ENCODE measurements at regions of chr19 and their contacts with region 1.

Region 1: DNA sequence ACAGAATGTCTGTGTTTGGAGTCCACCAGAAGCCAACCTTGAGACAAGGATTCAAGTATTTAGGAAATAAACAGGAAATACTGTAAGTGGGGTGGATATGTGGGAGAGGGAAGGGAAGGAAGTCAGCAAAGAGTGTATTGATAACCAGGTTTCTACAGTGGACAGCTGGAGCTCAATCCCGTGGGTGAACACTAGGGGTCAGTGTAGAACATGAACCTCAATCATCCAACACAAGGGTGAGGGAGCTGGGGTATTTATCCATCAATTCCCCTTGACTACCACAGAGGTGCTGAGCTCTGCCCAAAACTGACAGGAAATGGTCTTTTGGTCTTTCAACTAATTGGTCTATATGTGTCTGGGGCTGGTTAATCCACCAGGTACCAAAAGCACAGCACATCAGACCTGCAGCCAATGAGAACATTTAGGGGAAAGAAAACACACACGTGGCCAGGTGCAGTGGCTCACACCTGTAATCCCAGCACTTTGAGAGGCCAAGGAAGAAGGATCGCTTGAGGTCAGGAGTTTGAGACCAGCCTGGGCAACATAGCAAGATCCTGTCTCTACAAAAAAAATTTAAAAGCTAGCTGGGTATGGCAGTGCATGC is 5.6 kb upstream of the SYDE1 start:
- DNase-seq: peak in 1 of 3 donors; percentile 74
- ATAC-seq: peak; percentile 74
- H3K4me3 ChIP-seq: no peak overlapping the region
- H3K4me1 ChIP-seq: no peaks in the 10 kb centered on the region
- CTCF ChIP-seq: peak; percentile 40

Region 2: GRCh38 chr19:15154002-15154612 is 52.5 kb after region 1 on chr19:
- intact Hi-C with region 1: loop called in 1 of 2 experiments (anchors 2 kb)
- DNase-seq: peak in 2 of 3 donors; percentile 39 to 41
- ATAC-seq: peak; percentile 65
- H3K4me3 ChIP-seq: no peak overlapping the region
- H3K4me1 ChIP-seq: no peaks in the 10 kb centered on the region
- CTCF ChIP-seq: no peak

Measured in mucosa of descending colon (tissue), 3 donors.